PC-9 (cell line): ENCODE measurements at regions of chr4 and their contacts with region 1.

Region 1: GRCh38 chr4:64158648-64159326 is 250.5 kb downstream of the TECRL start:
- DNase-seq: peak; percentile 35 to 55
- H3K4me3 ChIP-seq: peak overlapping the region; percentile 55; the same call in 1 of the 2 replicates
- H3K27ac ChIP-seq: no peak overlapping the region
- H3K4me1 ChIP-seq: no peaks in the 10 kb centered on the region
- H3K27me3 ChIP-seq: no peaks in the 10 kb centered on the region
- CTCF ChIP-seq: peak; percentile 87

Region 2: DNA sequence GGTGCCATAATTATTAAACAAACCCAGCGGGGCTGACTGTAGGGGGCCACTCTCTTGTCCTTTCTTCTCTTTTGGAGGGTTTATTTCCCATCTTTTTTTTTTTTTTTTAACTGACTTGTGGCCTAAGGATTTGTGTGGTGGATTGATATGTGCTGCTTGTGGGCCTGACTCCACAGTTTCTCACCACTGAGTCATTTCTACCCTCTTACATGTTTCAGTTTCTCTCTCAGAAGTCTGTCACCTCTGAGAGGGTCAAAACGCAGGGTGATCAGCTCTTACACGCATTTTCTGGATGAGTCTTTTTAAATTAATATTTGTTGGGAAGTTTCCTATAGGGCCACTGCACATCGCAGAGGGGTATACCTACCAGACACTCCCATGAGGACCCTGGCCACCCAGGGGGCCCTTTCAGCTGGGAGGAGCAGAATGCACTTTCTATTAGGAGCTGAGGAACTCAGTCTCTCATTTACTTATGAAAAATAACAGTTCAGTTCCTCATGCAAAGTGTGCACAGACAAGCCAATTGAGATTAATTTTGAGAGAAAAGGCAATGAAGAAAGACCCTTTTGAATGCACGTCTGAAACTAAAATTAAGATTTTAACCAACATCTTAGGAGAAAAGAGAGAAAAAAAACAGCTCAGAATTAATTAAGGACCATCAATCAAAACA is 157.4 kb before region 1 on chr4:
- CTCF ChIA-PET with region 1: no interaction called
- POLR2A ChIA-PET with region 1: no interaction called
- intact Hi-C with region 1: no loop called
- DNase-seq: no peak
- H3K4me3 ChIP-seq: no peak overlapping the region
- H3K27ac ChIP-seq: no peak overlapping the region
- H3K4me1 ChIP-seq: no peaks in the 10 kb centered on the region
- H3K27me3 ChIP-seq: no peaks in the 10 kb centered on the region
- CTCF ChIP-seq: no peak

Region 3: GRCh38 chr4:64144994-64145393 is 13.8 kb before region 1 on chr4:
- CTCF ChIA-PET with region 1: no interaction called
- POLR2A ChIA-PET with region 1: no interaction called
- intact Hi-C with region 1: no loop called
- DNase-seq: peak in 1 of 2 experiments; percentile 43
- H3K4me3 ChIP-seq: no peak overlapping the region
- H3K27ac ChIP-seq: no peak overlapping the region
- H3K4me1 ChIP-seq: no peaks in the 10 kb centered on the region
- H3K27me3 ChIP-seq: no peaks in the 10 kb centered on the region
- CTCF ChIP-seq: no peak

Region 4: GRCh38 chr4:64417974-64418373 is 259.2 kb after region 1 on chr4:
- CTCF ChIA-PET with region 1: no interaction called
- POLR2A ChIA-PET with region 1: no interaction called
- intact Hi-C with region 1: no loop called
- DNase-seq: no peak
- H3K4me3 ChIP-seq: no peak overlapping the region
- H3K27ac ChIP-seq: no peak overlapping the region
- H3K4me1 ChIP-seq: no peaks in the 10 kb centered on the region
- H3K27me3 ChIP-seq: no peaks in the 10 kb centered on the region
- CTCF ChIP-seq: no peak

Region 5: GRCh38 chr4:64539234-64539849 is 380.6 kb after region 1 on chr4:
- CTCF ChIA-PET with region 1: no interaction called
- POLR2A ChIA-PET with region 1: no interaction called
- intact Hi-C with region 1: loop called (anchors 1 kb)
- DNase-seq: peak in 1 of 2 experiments; percentile 13
- H3K4me3 ChIP-seq: no peak overlapping the region
- H3K27ac ChIP-seq: no peak overlapping the region
- H3K4me1 ChIP-seq: no peaks in the 10 kb centered on the region
- H3K27me3 ChIP-seq: no peaks in the 10 kb centered on the region
- CTCF ChIP-seq: peak; percentile 70